IMR-90 (cell line): ENCODE measurements at regions of chr9 and their contacts with region 1.

Region 1: GRCh38 chr9:30172206-30172605 is 2212.2 kb upstream of the ACO1 start:
- DNase-seq: no peak
- ATAC-seq: no peak
- H3K4me3 ChIP-seq: no peak overlapping the region
- H3K27ac ChIP-seq: no peak overlapping the region
- H3K4me1 ChIP-seq: no peaks in the 10 kb centered on the region
- H3K27me3 ChIP-seq: no peaks in the 10 kb centered on the region
- CTCF ChIP-seq: no peak
- POLR2A ChIP-seq: no peak
- RAD21 ChIP-seq: no peak

Region 2: DNA sequence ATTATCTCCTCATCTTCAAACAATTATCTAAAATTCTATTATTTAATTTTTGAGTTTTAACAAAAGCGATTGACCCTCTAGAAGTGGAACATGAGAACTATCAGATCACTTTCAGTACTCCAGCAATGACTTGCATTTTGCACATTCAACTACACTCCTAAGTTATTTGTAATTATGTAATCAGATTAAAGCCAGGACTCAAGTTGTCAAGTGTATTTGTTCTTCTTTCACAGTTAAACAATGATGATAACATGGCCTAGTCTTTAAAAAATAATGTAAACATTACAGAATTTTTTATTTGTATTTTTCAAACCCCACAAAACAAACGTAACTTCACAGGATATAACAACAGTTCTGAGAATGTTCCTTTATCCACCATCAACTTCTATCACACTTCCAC is 63.4 kb after region 1 on chr9:
- CTCF ChIA-PET with region 1: no interaction called
- POLR2A ChIA-PET with region 1: no interaction called
- dilution Hi-C with region 1: no loop called
- in situ Hi-C with region 1: no loop called
- intact Hi-C with region 1: loop called (anchors 10 kb)
- DNase-seq: no peak
- ATAC-seq: no peak
- H3K4me3 ChIP-seq: no peak overlapping the region
- H3K27ac ChIP-seq: no peak overlapping the region
- H3K4me1 ChIP-seq: no peaks in the 10 kb centered on the region
- H3K27me3 ChIP-seq: no peaks in the 10 kb centered on the region
- CTCF ChIP-seq: no peak
- POLR2A ChIP-seq: no peak
- RAD21 ChIP-seq: no peak

Region 3: GRCh38 chr9:30575691-30576090 is 403.5 kb after region 1 on chr9:
- CTCF ChIA-PET with region 1: no interaction called
- POLR2A ChIA-PET with region 1: no interaction called
- dilution Hi-C with region 1: no loop called
- in situ Hi-C with region 1: no loop called
- intact Hi-C with region 1: no loop called
- DNase-seq: no peak
- ATAC-seq: no peak
- H3K4me3 ChIP-seq: no peak overlapping the region
- H3K27ac ChIP-seq: no peak overlapping the region
- H3K4me1 ChIP-seq: no peaks in the 10 kb centered on the region
- H3K27me3 ChIP-seq: no peaks in the 10 kb centered on the region
- CTCF ChIP-seq: no peak
- POLR2A ChIP-seq: no peak
- RAD21 ChIP-seq: no peak